ENCODE measurements at regions of chr14 and their contacts with region 1.

Region 1: DNA sequence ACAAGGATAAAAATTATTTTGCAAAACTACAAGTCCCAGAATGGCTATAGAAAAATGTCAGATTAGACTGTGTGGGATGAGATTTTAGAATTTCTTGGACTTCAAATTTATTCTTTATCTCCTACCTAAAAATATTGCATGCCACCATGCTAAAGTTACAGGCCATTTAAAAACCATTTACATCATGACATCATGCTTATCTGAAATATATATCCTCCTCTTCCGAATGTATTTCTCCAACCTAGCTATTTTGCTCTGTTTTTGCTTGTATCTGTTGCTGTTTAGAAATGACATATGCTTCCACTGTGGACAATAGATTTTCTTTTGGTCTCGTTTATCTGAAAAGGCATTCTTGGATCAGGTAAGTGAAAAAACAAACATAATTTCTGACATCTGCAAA is 471.7 kb downstream of the LRFN5 start:
- DNase-seq: no peak
- ATAC-seq: no peak
- H3K4me3 ChIP-seq: no peak overlapping the region
- H3K27ac ChIP-seq: no peak overlapping the region
- H3K4me1 ChIP-seq: no peaks in the 10 kb centered on the region
- H3K27me3 ChIP-seq: no peaks in the 10 kb centered on the region
- CTCF ChIP-seq: no peak
- EP300 ChIP-seq: no peak
- POLR2A ChIP-seq: no peak
- RAD21 ChIP-seq: no peak

Region 2: GRCh38 chr14:42027271-42027670 is 51.1 kb before region 1 on chr14:
- CTCF ChIA-PET with region 1: no interaction called
- POLR2A ChIA-PET with region 1: no interaction called
- RAD21 ChIA-PET with region 1: no interaction called
- SMC1A ChIA-PET with region 1: no interaction called
- in situ Hi-C with region 1: no loop called
- intact Hi-C with region 1: loop called (anchors 5 kb)
- DNase-seq: no peak
- ATAC-seq: no peak
- H3K4me3 ChIP-seq: no peak overlapping the region
- H3K27ac ChIP-seq: no peak overlapping the region
- H3K4me1 ChIP-seq: no peaks in the 10 kb centered on the region
- H3K27me3 ChIP-seq: no peaks in the 10 kb centered on the region
- CTCF ChIP-seq: no peak
- EP300 ChIP-seq: no peak
- POLR2A ChIP-seq: no peak
- RAD21 ChIP-seq: no peak

Region 3: GRCh38 chr14:42095155-42095554 is 16.8 kb after region 1 on chr14:
- CTCF ChIA-PET with region 1: no interaction called
- POLR2A ChIA-PET with region 1: no interaction called
- RAD21 ChIA-PET with region 1: no interaction called
- SMC1A ChIA-PET with region 1: no interaction called
- in situ Hi-C with region 1: no loop called
- intact Hi-C with region 1: no loop called
- DNase-seq: no peak
- ATAC-seq: no peak
- H3K4me3 ChIP-seq: no peak overlapping the region
- H3K27ac ChIP-seq: no peak overlapping the region
- H3K4me1 ChIP-seq: no peaks in the 10 kb centered on the region
- H3K27me3 ChIP-seq: no peaks in the 10 kb centered on the region
- CTCF ChIP-seq: no peak
- EP300 ChIP-seq: no peak
- POLR2A ChIP-seq: no peak
- RAD21 ChIP-seq: no peak